ENCODE measurements at regions of chr2 and their contacts with region 1.

Region 1: GRCh38 chr2:219073413-219074129 is 12.8 kb upstream of the IHH start:
- DNase-seq: peak; percentile 57
- H3K4me3 Mint-ChIP-seq: no peak overlapping the region
- H3K27ac Mint-ChIP-seq: peak overlapping the region; percentile 7
- H3K4me1 Mint-ChIP-seq: peaks cover 13% of the 10 kb centered on the region
- H3K27me3 Mint-ChIP-seq: no peaks in the 10 kb centered on the region
- CTCF ChIP-seq: peak; percentile 57

Region 2: GRCh38 chr2:218292048-218293014 is 781.2 kb before region 1 on chr2 and contains the start of gene TMBIM1:
- CTCF ChIA-PET with region 1: no interaction called
- POLR2A ChIA-PET with region 1: no interaction called
- intact Hi-C with region 1: no loop called
- DNase-seq: peak; percentile 77
- H3K4me3 Mint-ChIP-seq: peak within 1 kb of the TSS; percentile 75
- H3K27ac Mint-ChIP-seq: peak within 1 kb of the TSS; percentile 91
- H3K4me1 Mint-ChIP-seq: peaks cover 34% of the 10 kb centered on the region
- H3K27me3 Mint-ChIP-seq: no peaks in the 10 kb centered on the region
- CTCF ChIP-seq: peak; percentile 90
- total RNA-seq, gene TMBIM1: 96.8 and 107 TPM in 2 replicates

Region 3: GRCh38 chr2:219104107-219105035 is 30.8 kb after region 1 on chr2:
- CTCF ChIA-PET with region 1: interaction called, 12 read pairs
- POLR2A ChIA-PET with region 1: no interaction called
- intact Hi-C with region 1: no loop called
- DNase-seq: peak; percentile 60
- H3K4me3 Mint-ChIP-seq: no peak overlapping the region
- H3K27ac Mint-ChIP-seq: no peak overlapping the region
- H3K4me1 Mint-ChIP-seq: no peaks in the 10 kb centered on the region
- H3K27me3 Mint-ChIP-seq: no peaks in the 10 kb centered on the region
- CTCF ChIP-seq: peak; percentile 82

Region 4: GRCh38 chr2:220165401-220165800 is 1091.8 kb after region 1 on chr2:
- CTCF ChIA-PET with region 1: no interaction called
- POLR2A ChIA-PET with region 1: no interaction called
- intact Hi-C with region 1: no loop called
- DNase-seq: no peak
- H3K4me3 Mint-ChIP-seq: no peak overlapping the region
- H3K27ac Mint-ChIP-seq: no peak overlapping the region
- H3K4me1 Mint-ChIP-seq: peaks cover 6% of the 10 kb centered on the region
- H3K27me3 Mint-ChIP-seq: no peaks in the 10 kb centered on the region
- CTCF ChIP-seq: no peak